Esophagus muscularis mucosa (tissue), 4 donors: ENCODE measurements at regions of chr17 and their contacts with region 1.

Region 1: GRCh38 chr17:58417300-58418092 is at the start of gene RNF43:
- DNase-seq: peak; percentile 96
- H3K4me3 ChIP-seq: peak within 1 kb of the TSS; percentile 35 to 56 (median 44)
- H3K27ac ChIP-seq: peak within 1 kb of the TSS in 3 of 4 donors; percentile 4 to 59 (median 42)
- H3K4me1 ChIP-seq: peaks cover 4 to 12% (median 8%) of the 10 kb centered on the region in 4 donors
- H3K27me3 ChIP-seq: peaks cover 0 to 3% (median 0%) of the 10 kb centered on the region in 4 donors
- CTCF ChIP-seq: peak; percentile 65 to 84 (median 77)
- EP300 ChIP-seq: no peak
- POLR2A ChIP-seq: no peak
- total RNA-seq, gene RNF43: under 0.01 to 0.26 (median 0.11) TPM in 3 of 4 donors, not detected in the other

Region 2: DNA sequence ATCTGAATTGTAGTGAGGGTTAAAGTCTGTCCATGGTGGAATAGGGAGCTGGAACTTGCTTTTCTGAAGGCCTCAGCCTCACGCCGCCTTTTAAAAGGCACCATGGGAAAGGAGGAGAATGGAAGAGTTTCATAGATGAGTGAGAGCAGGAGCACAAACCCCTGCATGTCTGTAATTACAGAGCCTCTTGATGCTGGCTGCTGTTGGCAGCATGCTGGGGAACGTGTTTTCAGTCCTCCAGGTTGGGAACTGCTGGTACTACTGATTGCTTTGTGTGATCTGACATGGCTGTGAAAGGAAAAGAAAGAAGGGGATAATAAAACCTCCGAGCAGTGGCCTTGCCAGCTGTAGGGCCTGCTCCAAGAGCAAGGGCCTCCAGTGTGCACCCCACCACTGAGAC is 351.1 kb before region 1 on chr17:
- intact Hi-C with region 1: loop called (anchors 5 kb)
- DNase-seq: no peak
- H3K4me3 ChIP-seq: no peak overlapping the region
- H3K27ac ChIP-seq: no peak overlapping the region
- H3K4me1 ChIP-seq: peaks cover 0 to 6% (median 3%) of the 10 kb centered on the region in 4 donors
- H3K27me3 ChIP-seq: peaks cover 0 to 5% (median 0%) of the 10 kb centered on the region in 4 donors
- CTCF ChIP-seq: no peak
- EP300 ChIP-seq: no peak
- POLR2A ChIP-seq: no peak

Region 3: DNA sequence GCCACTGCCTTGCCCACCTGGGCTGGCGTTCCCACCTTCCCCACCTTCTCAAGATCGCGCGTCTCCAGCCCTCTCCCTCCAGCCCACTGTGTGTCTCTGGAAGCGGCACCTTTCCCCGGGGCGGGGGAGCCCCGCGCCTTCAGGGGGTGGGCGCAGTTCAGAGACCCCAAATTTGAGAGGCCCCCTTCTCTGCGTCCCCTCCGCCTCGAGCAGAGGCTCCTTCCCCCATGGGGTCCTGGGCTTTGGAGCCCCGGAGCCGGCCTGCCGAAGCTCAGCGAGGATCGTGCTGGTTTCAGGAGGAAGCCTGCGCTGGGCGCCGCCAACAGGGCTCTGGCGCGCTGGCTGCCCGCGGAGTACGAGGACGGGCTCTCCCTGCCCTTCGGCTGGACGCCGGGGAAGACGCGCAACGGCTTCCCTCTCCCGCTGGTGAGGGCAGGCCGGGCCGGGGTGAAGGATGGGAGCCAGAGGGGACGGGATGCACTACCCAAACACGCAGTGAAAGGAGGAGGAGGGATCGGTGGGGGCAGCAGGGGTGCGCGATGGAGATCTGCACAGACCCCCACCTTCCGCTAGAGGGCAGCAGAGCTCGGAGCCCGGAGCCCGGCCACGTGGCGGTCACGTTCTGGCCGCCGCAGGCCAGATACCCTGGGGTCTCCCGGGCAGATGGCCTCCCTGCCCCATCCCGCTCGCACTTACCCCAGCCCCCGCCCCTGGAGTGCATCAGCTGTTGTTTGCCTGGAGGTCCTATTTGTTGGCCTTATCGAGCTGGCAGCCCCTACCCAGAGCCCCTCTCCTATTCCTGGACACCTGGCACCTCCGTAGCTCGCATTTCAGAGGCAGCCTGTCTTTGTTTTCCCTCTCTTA is 168.0 kb before region 1 on chr17:
- intact Hi-C with region 1: loop called (anchors 5 kb)
- DNase-seq: no peak
- H3K4me3 ChIP-seq: peak overlapping the region; percentile 53 to 63 (median 54)
- H3K27ac ChIP-seq: no peak overlapping the region
- H3K4me1 ChIP-seq: peaks cover 7 to 15% (median 12%) of the 10 kb centered on the region in 4 donors
- H3K27me3 ChIP-seq: peaks cover 0 to 66% (median 3%) of the 10 kb centered on the region in 4 donors
- CTCF ChIP-seq: peak; percentile 85 to 96 (median 92)
- EP300 ChIP-seq: no peak
- POLR2A ChIP-seq: no peak

Region 4: GRCh38 chr17:58352014-58352842 is 65.3 kb before region 1 on chr17 and contains the start of gene SUPT4H1:
- intact Hi-C with region 1: loop called (anchors 2 kb)
- DNase-seq: peak; percentile 98
- H3K4me3 ChIP-seq: peak within 1 kb of the TSS; percentile 78 to 94 (median 81)
- H3K27ac ChIP-seq: peak within 1 kb of the TSS; percentile 89 to 97 (median 94)
- H3K4me1 ChIP-seq: peaks cover 11 to 30% (median 20%) of the 10 kb centered on the region in 4 donors
- H3K27me3 ChIP-seq: no peaks in the 10 kb centered on the region
- CTCF ChIP-seq: peak in 1 of 3 experiments; percentile 22
- EP300 ChIP-seq: no peak
- POLR2A ChIP-seq: peak; percentile 82
- total RNA-seq, gene SUPT4H1: 35.3 to 59.6 (median 47.0) TPM